ENCODE measurements at regions of chr12 and their contacts with region 1.

Region 1: DNA sequence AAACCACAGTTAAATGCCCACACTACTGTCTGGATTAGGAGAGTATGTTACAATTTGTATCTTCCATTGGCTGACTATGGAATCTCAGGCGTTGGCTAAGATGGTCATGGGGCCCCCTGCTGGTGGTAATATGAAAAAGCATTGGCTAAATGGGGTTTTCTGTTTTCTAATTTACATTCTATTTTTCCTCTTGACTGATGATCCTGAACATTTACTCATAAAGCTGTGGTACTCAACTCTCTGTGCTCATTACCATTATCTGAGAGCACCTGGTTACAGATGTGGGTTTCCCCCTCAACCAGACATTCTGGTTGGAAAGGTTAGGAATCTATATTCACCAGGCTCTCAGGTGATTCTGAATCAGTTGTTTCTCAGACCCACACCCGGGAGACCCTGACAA is 64.8 kb downstream of the WSCD2 start:
- DNase-seq: no peak
- ATAC-seq: no peak

Region 2: GRCh38 chr12:107917912-107918800 is 275.8 kb before region 1 on chr12:
- intact Hi-C with region 1: loop called in 1 of 2 experiments (anchors 5 kb)
- DNase-seq: no peak
- ATAC-seq: no peak

Region 3: GRCh38 chr12:107992870-107993451 is 201.0 kb before region 1 on chr12:
- intact Hi-C with region 1: loop called in 1 of 2 experiments (anchors 5 kb)
- DNase-seq: no peak
- ATAC-seq: no peak

Region 4: GRCh38 chr12:108099073-108099472 is 94.8 kb before region 1 on chr12:
- intact Hi-C with region 1: loop called in 1 of 2 experiments (anchors 10 kb)
- DNase-seq: no peak
- ATAC-seq: no peak

Region 5: GRCh38 chr12:108133482-108133881 is 60.4 kb before region 1 on chr12:
- intact Hi-C with region 1: loop called in 1 of 2 experiments (anchors 5 kb)
- DNase-seq: peak; percentile 34
- ATAC-seq: peak; percentile 79 to 83

Measured in left cardiac atrium (tissue), 4 donors.